Naive thymus-derived CD4-positive, alpha-beta T cell (primary cell): ENCODE measurements at regions of chr10 and their contacts with region 1.

Region 1: GRCh38 chr10:110918643-110919363 is at the start of gene BBIP1:
- DNase-seq: peak in 4 of 9 donors; percentile 70 to 98 (median 90)
- ATAC-seq: peak; percentile 96
- H3K4me3 ChIP-seq: peak within 1 kb of the TSS; percentile 97
- H3K4me3 Mint-ChIP-seq: peak within 1 kb of the TSS; percentile 86 to 100 (median 98)
- H3K27ac ChIP-seq: peak within 1 kb of the TSS; percentile 100
- H3K27ac Mint-ChIP-seq: peak within 1 kb of the TSS; percentile 97 to 100 (median 99)
- H3K4me1 ChIP-seq: peaks cover 7 to 17% of the 10 kb centered on the region in 2 donors
- H3K4me1 Mint-ChIP-seq: peaks cover 24 to 66% (median 59%) of the 10 kb centered on the region in 7 donors
- H3K27me3 ChIP-seq: no peaks in the 10 kb centered on the region
- H3K27me3 Mint-ChIP-seq: no peaks in the 10 kb centered on the region
- total RNA-seq, gene BBIP1: 22.2 to 64.2 (median 44.6) TPM

Region 2: GRCh38 chr10:109922976-109923921 is 995.6 kb before region 1 on chr10 and contains the start of gene XPNPEP1:
- CTCF ChIA-PET with region 1: no interaction called
- POLR2A ChIA-PET with region 1: no interaction called
- intact Hi-C with region 1: loop called in 1 of 2 experiments (anchors 2 kb)
- DNase-seq: peak; percentile 55 to 90 (median 66)
- ATAC-seq: peak; percentile 98
- H3K4me3 ChIP-seq: peak within 1 kb of the TSS; percentile 67
- H3K4me3 Mint-ChIP-seq: peak within 1 kb of the TSS; percentile 78 to 94 (median 90)
- H3K27ac ChIP-seq: peak within 1 kb of the TSS; percentile 83
- H3K27ac Mint-ChIP-seq: peak within 1 kb of the TSS; percentile 75 to 95 (median 89)
- H3K4me1 ChIP-seq: peaks cover 30 to 39% of the 10 kb centered on the region in 2 donors
- H3K4me1 Mint-ChIP-seq: peaks cover 36 to 58% (median 54%) of the 10 kb centered on the region in 7 donors
- H3K27me3 ChIP-seq: no peaks in the 10 kb centered on the region
- H3K27me3 Mint-ChIP-seq: peaks cover 0 to 16% (median 0%) of the 10 kb centered on the region in 5 donors
- total RNA-seq, gene XPNPEP1: 44.1 to 100 (median 60.7) TPM

Region 3: DNA sequence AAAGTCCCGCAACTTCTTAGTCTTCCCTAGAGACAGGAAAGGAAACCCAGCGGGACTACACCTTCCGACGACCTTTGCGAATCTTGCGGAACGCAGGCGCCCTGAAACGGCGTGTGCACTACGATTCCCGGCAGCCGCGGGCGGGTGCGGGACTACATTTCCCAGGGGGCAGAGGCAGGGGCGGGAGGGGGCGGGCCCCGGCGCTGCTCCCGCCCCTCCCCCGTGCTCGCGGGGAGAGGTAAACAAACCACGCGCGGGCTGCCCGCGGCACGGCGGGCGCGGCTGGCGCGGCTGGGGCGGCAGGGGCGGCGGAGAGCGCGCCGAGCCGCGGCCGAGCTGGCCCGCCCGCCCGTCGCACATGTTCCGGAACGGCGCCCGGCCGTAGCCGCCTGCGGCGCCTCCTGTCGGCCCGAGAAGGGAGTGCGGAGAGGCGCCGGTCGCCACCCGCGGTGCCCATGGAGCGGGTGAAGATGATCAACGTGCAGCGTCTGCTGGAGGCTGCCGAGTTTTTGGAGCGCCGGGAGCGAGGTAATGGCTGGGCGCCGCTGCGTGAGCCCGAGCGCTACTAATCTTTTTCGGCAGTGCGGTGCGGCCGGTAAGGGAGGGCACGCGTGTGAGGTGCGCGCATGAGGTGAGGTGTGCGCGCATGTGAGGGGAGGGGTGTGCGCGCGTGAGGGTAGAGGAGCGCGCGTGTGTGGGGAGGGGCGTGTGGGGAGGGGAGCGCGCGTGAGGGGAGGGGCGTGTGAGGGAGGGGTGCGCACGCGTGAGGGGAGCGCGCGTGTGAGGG is 692.9 kb before region 1 on chr10:
- CTCF ChIA-PET with region 1: no interaction called
- POLR2A ChIA-PET with region 1: no interaction called
- intact Hi-C with region 1: loop called (anchors 1 to 2 kb)
- DNase-seq: peak; percentile 83 to 91 (median 88)
- ATAC-seq: peak; percentile 73
- H3K4me3 ChIP-seq: peak overlapping the region; percentile 75
- H3K4me3 Mint-ChIP-seq: peak overlapping the region; percentile 87 to 99 (median 94)
- H3K27ac ChIP-seq: peak overlapping the region; percentile 92
- H3K27ac Mint-ChIP-seq: peak overlapping the region; percentile 78 to 97 (median 96)
- H3K4me1 ChIP-seq: peaks cover 16 to 27% of the 10 kb centered on the region in 2 donors
- H3K4me1 Mint-ChIP-seq: peaks cover 27 to 68% (median 49%) of the 10 kb centered on the region in 7 donors
- H3K27me3 ChIP-seq: no peaks in the 10 kb centered on the region
- H3K27me3 Mint-ChIP-seq: no peaks in the 10 kb centered on the region

Region 4: DNA sequence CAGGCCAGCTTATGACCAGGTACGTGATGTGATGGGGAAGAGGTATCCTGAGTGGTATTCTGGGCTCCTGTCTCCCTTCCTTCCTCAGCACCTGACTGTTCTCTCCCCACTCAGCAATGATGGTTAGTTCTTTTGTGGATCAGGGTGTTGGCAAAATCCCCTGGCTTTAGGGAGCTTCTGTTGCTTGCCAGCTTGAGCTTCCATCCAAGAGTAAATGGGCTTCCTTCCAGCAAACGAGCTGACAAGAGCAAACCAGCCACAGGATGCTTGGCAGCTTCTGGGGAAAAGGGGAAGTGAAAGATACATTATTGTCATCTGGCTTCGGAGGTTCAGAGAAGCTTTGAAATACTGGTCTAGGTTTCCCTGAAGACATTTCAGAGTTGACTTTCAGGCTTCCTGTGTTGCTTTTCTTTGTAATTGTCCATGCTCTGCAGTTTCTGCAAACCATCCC is 415.9 kb before region 1 on chr10:
- CTCF ChIA-PET with region 1: no interaction called
- POLR2A ChIA-PET with region 1: no interaction called
- intact Hi-C with region 1: loop called in 1 of 2 experiments (anchors 2 kb)
- DNase-seq: peak in 1 of 9 donors; percentile 18
- ATAC-seq: peak; percentile 10
- H3K4me3 ChIP-seq: peak overlapping the region; percentile 17
- H3K4me3 Mint-ChIP-seq: peak overlapping the region; percentile 15 to 97 (median 70)
- H3K27ac ChIP-seq: peak overlapping the region; percentile 53
- H3K27ac Mint-ChIP-seq: peak overlapping the region; percentile 53 to 94 (median 81)
- H3K4me1 ChIP-seq: peaks cover 42 to 70% of the 10 kb centered on the region in 2 donors
- H3K4me1 Mint-ChIP-seq: peaks cover 55 to 88% (median 60%) of the 10 kb centered on the region in 7 donors
- H3K27me3 ChIP-seq: no peaks in the 10 kb centered on the region
- H3K27me3 Mint-ChIP-seq: peaks cover 0 to 3% (median 0%) of the 10 kb centered on the region in 5 donors

Region 5: GRCh38 chr10:110803830-110804338 is 114.9 kb before region 1 on chr10:
- CTCF ChIA-PET with region 1: no interaction called
- POLR2A ChIA-PET with region 1: interaction called, 7 read pairs
- intact Hi-C with region 1: loop called in 1 of 2 experiments (anchors 1 kb)
- DNase-seq: peak in 2 of 9 donors; percentile 25 to 36
- ATAC-seq: peak; percentile 67
- H3K4me3 ChIP-seq: peak overlapping the region; percentile 29
- H3K4me3 Mint-ChIP-seq: peak overlapping the region in 9 of 10 donors; percentile 12 to 78 (median 69)
- H3K27ac ChIP-seq: peak overlapping the region; percentile 61
- H3K27ac Mint-ChIP-seq: peak overlapping the region; percentile 58 to 100 (median 93)
- H3K4me1 ChIP-seq: peaks cover 25 to 34% of the 10 kb centered on the region in 2 donors
- H3K4me1 Mint-ChIP-seq: peaks cover 30 to 53% (median 47%) of the 10 kb centered on the region in 7 donors
- H3K27me3 ChIP-seq: no peaks in the 10 kb centered on the region
- H3K27me3 Mint-ChIP-seq: no peaks in the 10 kb centered on the region

Region 6: GRCh38 chr10:110901954-110902819 is 16.6 kb before region 1 on chr10:
- CTCF ChIA-PET with region 1: interaction called, 6 read pairs
- POLR2A ChIA-PET with region 1: interaction called, 10 read pairs
- intact Hi-C with region 1: loop called in 1 of 2 experiments (anchors 2 kb)
- DNase-seq: no peak
- ATAC-seq: peak; percentile 46
- H3K4me3 ChIP-seq: no peak overlapping the region
- H3K4me3 Mint-ChIP-seq: no peak overlapping the region
- H3K27ac ChIP-seq: no peak overlapping the region
- H3K27ac Mint-ChIP-seq: peak overlapping the region in 6 of 9 donors; percentile 32 to 73 (median 44)
- H3K4me1 ChIP-seq: no peaks in the 10 kb centered on the region
- H3K4me1 Mint-ChIP-seq: peaks cover 8 to 40% (median 22%) of the 10 kb centered on the region in 7 donors
- H3K27me3 ChIP-seq: no peaks in the 10 kb centered on the region
- H3K27me3 Mint-ChIP-seq: no peaks in the 10 kb centered on the region

Region 7: DNA sequence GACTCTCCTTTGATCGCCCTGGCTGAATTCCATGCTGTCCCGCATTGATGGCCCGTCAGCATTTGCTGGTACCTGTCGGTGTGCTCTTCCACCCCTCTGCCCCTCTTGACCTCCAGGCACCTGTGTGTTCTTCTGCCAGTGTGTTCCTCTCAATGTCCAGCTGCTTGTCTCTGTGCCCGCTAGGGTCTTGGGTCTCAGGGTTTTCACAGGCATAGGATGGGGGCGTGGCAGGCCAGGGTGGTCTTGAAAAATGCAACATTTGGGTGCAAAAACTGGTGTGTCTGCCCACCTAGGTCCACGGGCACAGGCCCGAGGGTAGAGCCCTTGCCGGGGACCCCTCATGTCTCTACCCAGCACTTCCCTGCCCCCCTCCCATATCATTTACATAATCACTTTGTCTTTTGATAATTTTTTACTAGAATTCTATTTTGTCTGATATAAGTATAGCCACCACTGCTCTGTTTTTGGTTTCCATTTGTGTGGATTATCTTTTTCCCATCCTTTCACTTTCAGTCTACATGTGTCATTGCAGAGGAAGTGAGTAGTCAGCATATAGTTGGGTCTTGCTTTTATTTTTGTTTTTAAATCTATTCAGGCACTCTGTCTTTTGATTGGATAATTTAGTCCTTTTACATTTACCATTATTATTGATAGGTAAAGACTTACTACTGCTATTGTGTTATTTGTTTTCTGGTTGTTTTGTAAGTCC is 111.4 kb after region 1 on chr10:
- CTCF ChIA-PET with region 1: no interaction called
- POLR2A ChIA-PET with region 1: no interaction called
- intact Hi-C with region 1: loop called in 1 of 2 experiments (anchors 1 kb)
- DNase-seq: no peak
- ATAC-seq: no peak
- H3K4me3 ChIP-seq: no peak overlapping the region
- H3K4me3 Mint-ChIP-seq: peak overlapping the region in 1 of 10 donors; percentile 16
- H3K27ac ChIP-seq: no peak overlapping the region
- H3K27ac Mint-ChIP-seq: peak overlapping the region in 1 of 9 donors; percentile 5
- H3K4me1 ChIP-seq: no peaks in the 10 kb centered on the region
- H3K4me1 Mint-ChIP-seq: peaks cover 0 to 9% (median 4%) of the 10 kb centered on the region in 7 donors
- H3K27me3 ChIP-seq: no peaks in the 10 kb centered on the region
- H3K27me3 Mint-ChIP-seq: peaks cover 0 to 4% (median 0%) of the 10 kb centered on the region in 5 donors

Region 8: DNA sequence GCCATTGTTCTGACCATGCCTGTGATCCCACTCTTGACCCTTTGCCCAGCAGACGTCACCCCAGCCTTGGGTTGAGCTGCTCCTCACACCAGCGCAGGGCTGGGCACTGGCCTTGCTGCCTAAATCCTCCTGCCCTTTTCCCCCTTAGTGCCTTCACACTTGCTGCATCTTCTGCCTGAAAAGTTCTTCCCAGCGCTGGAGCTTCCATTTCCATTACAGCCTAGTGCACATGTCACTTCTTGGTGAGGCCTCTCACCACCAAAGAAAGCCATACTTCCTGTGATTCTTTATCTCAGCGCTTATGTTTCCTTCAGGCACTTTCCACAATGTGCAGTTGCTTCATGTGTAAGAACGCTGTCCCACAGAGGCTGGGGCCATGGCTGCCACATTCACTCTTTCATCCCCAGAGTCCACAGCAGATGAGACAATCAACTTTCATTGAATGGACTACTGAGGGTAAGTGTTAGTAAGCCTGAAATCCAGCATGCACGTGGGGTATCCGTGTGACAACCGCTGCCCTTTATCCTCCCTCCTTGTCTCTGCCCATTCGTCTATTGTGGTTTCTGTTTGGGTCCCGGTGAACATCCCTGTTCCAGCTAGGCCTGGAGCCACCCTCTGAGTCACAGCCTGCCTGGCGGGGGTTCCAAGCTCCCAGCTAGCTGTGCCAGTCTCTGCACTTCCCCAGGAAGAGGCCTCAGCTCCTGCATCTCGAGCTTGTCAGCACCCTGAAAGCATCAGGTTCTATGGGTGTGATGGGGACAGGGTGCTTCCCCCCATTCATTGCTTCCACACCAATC is 195.4 kb after region 1 on chr10:
- CTCF ChIA-PET with region 1: no interaction called
- POLR2A ChIA-PET with region 1: no interaction called
- intact Hi-C with region 1: no loop called
- DNase-seq: no peak
- ATAC-seq: peak; percentile 19
- H3K4me3 ChIP-seq: no peak overlapping the region
- H3K4me3 Mint-ChIP-seq: peak overlapping the region in 1 of 10 donors; percentile 24
- H3K27ac ChIP-seq: no peak overlapping the region
- H3K27ac Mint-ChIP-seq: peak overlapping the region in 1 of 9 donors; percentile 26
- H3K4me1 ChIP-seq: no peaks in the 10 kb centered on the region
- H3K4me1 Mint-ChIP-seq: peaks cover 9 to 21% (median 13%) of the 10 kb centered on the region in 7 donors
- H3K27me3 ChIP-seq: no peaks in the 10 kb centered on the region
- H3K27me3 Mint-ChIP-seq: peaks cover 0 to 11% (median 0%) of the 10 kb centered on the region in 5 donors

Region 9: DNA sequence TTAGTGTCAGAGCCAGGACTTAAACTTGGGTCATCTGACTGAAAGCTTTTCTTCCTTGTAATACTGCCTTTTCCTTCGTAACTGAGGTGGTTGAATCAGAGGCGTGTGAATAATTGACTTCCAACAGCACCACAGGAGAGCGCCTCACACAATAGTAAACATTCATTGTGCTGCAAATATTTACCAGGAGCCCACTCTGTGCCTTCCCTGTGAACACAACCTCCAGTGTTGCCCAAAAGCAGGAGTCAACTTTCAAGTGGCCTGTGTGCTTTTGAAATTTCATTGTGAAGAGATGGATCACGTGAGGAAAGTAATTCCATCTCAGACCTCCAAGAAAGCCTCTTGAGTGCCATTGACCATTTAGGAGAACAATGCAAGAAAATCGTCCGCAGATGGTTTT is 218.2 kb after region 1 on chr10:
- CTCF ChIA-PET with region 1: no interaction called
- POLR2A ChIA-PET with region 1: no interaction called
- intact Hi-C with region 1: no loop called
- DNase-seq: no peak
- ATAC-seq: no peak
- H3K4me3 ChIP-seq: no peak overlapping the region
- H3K4me3 Mint-ChIP-seq: no peak overlapping the region
- H3K27ac ChIP-seq: no peak overlapping the region
- H3K27ac Mint-ChIP-seq: no peak overlapping the region
- H3K4me1 ChIP-seq: no peaks in the 10 kb centered on the region
- H3K4me1 Mint-ChIP-seq: no peaks in the 10 kb centered on the region
- H3K27me3 ChIP-seq: no peaks in the 10 kb centered on the region
- H3K27me3 Mint-ChIP-seq: peaks cover 37 to 52% (median 44%) of the 10 kb centered on the region in 5 donors

Region 10: GRCh38 chr10:111207500-111207899 is 288.7 kb after region 1 on chr10:
- CTCF ChIA-PET with region 1: no interaction called
- POLR2A ChIA-PET with region 1: no interaction called
- intact Hi-C with region 1: no loop called
- DNase-seq: peak in 5 of 9 donors; percentile 1 to 19 (median 12)
- ATAC-seq: no peak
- H3K4me3 ChIP-seq: no peak overlapping the region
- H3K4me3 Mint-ChIP-seq: no peak overlapping the region
- H3K27ac ChIP-seq: no peak overlapping the region
- H3K27ac Mint-ChIP-seq: no peak overlapping the region
- H3K4me1 ChIP-seq: no peaks in the 10 kb centered on the region
- H3K4me1 Mint-ChIP-seq: no peaks in the 10 kb centered on the region
- H3K27me3 ChIP-seq: no peaks in the 10 kb centered on the region
- H3K27me3 Mint-ChIP-seq: peaks cover 0 to 16% (median 11%) of the 10 kb centered on the region in 5 donors